GM23248 (cell line): ENCODE measurements at regions of chr9 and their contacts with region 1.

Region 1: GRCh38 chr9:74570879-74571512 is 73.9 kb downstream of the RORB start:
- DNase-seq: peak; percentile 50
- H3K4me3 ChIP-seq: no peak overlapping the region
- H3K27ac ChIP-seq: no peak overlapping the region
- H3K4me1 ChIP-seq: no peaks in the 10 kb centered on the region
- H3K27me3 ChIP-seq: no peaks in the 10 kb centered on the region

Region 2: DNA sequence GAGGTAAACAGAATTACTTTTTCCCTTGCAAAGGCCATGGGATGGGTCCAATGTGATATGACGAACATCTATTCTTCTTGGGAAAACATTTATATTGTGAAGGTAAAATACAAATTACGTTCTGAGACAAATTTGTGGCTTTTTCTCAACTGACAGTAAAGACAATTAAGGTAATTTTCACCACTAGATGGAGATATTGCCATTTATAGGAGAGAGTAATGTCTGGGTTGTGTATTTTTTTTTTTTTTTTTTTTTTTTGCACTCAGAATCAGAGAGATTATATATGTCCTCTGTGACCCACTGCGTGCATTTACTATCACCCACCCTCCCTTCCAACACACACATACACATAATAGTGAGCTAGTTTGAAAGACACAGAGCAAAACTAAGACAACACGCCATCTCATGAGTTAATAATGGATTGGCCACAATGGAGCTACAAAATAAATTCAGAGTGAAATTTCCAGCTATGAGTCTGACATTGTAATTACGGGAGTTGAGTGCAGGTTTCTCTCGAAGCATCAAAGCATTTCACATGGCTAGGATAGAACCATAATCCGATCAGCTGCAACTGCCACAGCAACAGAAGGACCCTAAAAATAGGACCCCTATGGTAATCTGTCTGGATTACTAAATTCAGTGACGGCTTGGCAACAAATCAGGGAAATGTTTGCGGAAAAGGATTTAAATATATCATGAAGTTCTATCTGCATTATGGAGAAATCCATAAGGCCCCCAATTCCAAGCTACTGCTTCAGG is 1370.1 kb before region 1 on chr9:
- in situ Hi-C with region 1: loop called (anchors 25 kb)
- DNase-seq: peak; percentile 54
- H3K4me3 ChIP-seq: no peak overlapping the region
- H3K27ac ChIP-seq: no peak overlapping the region
- H3K4me1 ChIP-seq: no peaks in the 10 kb centered on the region
- H3K27me3 ChIP-seq: no peaks in the 10 kb centered on the region; the same call in 1 of the 2 replicates

Region 3: DNA sequence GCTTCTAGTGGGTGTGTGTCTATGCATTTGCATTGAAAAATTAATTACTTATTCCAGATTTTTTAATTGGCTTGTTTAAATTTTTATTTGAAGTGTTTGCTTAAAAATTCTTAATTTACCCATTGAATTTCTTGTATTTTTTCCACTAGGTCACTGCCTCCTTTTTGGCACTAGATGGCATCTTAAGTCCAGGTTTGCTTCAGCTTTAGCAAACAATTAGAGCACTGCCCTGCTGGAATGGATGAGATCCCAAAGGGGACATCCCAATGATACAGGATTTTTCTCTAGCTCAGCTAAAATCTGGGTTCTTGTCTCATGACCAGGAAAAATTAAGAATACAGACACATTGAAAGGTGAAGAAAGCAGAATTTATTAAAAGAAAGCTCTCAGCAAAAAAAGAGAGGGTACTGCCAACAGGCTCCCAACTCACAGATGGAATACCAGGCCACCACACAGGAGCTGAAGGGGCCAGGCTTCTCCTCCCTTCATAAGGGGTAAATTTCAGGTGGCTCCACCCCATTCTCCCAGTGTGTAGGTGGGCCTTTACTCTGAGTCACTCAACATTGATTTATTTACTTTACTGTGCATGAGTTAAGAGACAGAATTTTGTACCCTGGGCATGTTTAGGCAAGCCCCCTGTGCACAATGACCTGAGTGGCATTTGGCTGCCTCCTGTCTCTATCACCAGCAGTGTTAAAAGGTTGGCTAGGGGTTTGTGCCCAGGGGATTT is 887.0 kb before region 1 on chr9:
- in situ Hi-C with region 1: loop called (anchors 25 kb)
- DNase-seq: peak; percentile 70
- H3K4me3 ChIP-seq: no peak overlapping the region
- H3K27ac ChIP-seq: no peak overlapping the region
- H3K4me1 ChIP-seq: peaks cover 8% of the 10 kb centered on the region; the same call in 1 of the 2 replicates
- H3K27me3 ChIP-seq: no peaks in the 10 kb centered on the region

Region 4: GRCh38 chr9:74681906-74682305 is 110.9 kb after region 1 on chr9:
- in situ Hi-C with region 1: no loop called
- DNase-seq: no peak
- H3K4me3 ChIP-seq: no peak overlapping the region
- H3K27ac ChIP-seq: no peak overlapping the region
- H3K4me1 ChIP-seq: no peaks in the 10 kb centered on the region
- H3K27me3 ChIP-seq: no peaks in the 10 kb centered on the region